Cardiac septum (tissue), 1 donor: ENCODE measurements at regions of chr7 and their contacts with region 1.

Region 1: DNA sequence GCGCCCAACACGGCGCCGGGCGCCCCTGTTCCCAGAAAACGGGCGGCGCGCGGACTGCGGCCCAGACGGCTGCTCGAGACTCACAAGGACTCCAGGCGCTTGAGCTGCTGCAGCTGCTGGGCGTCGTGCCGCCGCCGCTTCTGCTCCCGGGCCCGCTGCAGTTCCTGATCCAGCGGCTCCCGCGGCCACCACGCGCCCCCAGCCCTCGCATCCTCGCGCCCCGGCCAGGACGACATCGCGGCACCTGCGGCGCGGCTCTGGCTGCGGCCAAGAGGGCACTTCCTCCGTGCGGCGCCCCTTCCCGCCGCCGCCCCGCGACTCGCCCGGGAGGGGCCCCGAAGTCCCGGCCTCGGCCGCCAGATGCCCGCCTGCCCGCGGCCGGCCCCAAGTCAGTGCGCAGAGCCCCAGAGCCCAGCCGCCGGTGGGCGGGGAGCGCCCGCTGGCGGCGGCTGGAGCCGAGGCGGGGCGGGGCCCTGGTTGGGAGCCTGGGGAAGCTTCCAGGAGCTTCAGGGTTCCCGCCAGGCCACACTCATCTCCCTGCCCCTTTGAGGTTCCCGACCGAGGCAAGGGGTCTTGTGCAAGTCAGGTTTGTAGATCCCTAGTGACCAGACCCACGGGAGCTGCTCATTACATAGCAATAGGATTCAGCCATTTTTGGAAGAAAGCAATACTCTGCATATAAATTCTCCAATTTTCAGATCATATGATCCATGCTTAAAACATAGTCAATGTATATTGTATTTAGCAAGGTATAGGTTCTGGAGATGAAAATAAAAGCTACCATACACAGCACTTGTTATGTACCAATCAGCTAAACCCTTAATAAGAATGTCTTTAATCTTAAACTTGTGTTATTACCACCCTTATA is 14.2 kb upstream of the FKBP9 start:
- DNase-seq: peak; percentile 94

Region 2: DNA sequence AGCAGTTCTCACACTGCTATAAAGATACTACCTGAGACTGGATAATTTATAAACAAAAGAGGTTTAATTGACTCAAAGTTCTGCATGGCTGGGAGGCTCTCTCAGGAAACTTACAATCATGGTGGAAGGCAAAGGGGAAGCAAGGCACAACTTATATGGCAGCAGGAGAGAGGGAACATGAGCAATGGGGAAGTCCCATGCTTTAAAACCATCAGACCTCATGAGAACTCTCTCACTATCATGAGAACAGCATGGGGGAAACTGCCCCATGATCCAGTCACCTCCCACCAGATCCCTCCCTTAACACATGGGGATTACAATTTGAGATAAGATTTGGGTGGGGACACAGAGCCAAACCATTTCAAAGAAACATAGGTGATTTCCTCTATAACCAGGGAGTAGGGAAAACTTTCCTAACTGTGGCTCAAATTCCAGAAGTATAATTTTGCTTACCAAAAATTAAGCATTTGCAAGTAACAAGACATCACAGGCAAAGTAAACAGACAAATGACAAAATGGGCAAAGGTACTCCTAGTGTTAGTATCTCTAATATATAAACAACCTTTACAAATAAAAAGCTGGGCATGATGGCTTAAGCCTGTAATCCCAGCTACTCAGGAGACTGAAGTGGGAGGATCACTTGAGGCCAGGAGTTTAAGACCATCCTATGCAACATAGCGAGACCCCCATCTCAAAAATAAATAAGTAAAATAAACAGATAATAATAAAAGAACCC is 139.4 kb before region 1 on chr7:
- intact Hi-C with region 1: loop called (anchors 1 kb)
- DNase-seq: no peak

Region 3: DNA sequence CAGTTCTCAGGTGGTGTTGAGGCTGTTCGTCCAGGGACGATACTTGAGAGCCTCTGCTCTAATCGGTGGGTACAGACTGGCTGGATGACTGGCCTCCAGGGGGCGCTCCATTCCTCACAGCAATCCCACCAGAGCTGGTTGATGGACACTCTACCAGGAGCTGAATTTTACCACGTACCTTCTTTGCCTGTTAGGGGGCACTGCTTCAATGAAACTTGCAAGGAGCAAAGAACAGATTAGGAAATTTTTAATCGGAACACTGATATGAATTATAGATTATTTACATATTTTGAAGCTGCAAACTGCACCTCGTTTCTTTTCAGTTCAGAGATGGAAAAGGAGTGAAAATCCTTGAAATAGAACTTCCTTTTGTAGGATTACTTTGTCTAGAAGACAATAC is 96.3 kb before region 1 on chr7:
- intact Hi-C with region 1: loop called (anchors 1 kb)
- DNase-seq: peak; percentile 94

Region 4: DNA sequence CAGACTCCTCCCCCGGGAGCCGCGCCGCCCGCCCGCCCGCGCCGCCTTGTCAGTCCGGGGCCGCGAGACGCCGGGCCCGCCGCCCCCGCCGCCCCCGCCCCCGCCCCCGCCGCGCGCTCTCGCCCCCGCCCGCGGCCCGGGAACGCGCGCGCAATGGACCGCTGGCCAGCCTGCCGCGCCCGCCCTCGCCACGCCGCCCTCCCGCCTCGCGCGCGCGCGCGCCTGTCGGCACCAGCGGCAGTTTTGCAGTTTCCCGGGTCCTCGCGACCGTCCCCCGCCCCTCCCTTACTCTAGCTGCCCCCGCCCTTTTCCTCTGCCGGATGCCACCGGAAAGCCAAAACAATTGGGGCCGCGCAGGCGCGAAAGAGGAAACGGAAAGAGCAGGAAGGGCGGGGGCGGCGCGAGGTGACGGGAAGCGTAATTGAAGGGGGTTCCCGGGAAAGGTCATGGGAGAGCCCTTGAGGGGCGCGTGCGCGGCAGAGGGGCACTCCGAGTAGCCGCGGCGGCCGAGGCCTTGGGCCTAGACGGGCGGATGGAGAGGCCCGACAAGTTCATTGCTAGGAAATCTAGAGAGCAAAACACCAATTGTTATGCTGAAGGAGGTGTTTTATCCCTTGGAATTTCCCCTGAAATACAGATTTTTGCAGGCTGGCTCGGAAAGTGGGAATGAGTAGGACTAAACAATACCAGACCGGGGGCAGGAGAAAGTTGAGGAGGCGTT is 51.1 kb before region 1 on chr7:
- intact Hi-C with region 1: loop called (anchors 1 kb)
- DNase-seq: peak; percentile 99

Region 5: GRCh38 chr7:32957326-32958045 is 14.5 kb after region 1 on chr7 and contains the start of gene FKBP9:
- intact Hi-C with region 1: loop called (anchors 2 kb)
- DNase-seq: peak; percentile 94
- total RNA-seq, gene FKBP9: 137 TPM

Region 6: GRCh38 chr7:33143996-33144718 is 201.1 kb after region 1 on chr7:
- intact Hi-C with region 1: no loop called
- DNase-seq: no peak